ENCODE measurements at regions of chr11 and their contacts with region 1.

Region 1: DNA sequence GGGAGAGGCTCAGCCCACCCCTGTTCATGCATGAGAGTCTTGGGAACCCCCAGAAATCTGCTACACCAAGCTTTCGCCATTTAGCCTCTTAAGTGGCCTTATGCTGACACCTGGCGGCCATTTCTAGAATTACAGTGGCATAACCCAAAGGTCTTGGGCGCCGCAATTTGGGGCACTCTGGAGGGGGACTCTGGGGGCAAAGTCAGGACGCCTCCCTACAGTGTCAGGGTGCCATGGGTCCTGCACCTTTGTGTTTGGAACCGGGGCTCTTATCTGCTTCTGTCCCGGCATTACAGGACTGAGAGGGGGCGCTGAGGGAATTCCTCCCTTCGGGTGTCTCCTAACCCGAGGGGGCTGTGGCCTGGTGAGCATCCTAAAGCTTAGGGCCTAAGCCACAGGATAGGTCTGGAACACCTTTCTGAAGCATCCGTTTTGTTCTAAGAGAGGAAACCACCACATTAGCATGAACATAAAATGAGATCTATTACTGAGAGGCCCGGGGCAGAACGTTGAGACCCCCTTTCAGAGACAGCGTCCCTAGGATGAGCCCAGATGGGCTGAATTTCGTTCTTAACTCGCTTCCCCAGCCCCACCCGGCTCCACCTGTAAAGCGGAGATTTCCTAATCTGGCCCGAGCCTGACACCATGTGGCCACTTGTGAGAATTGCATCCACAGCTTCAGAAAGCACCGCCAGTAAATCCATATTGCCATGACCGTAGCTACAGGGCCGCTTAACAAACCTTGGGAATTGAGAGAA is 9.3 kb downstream of the INS start:
- DNase-seq: peak in 1 of 2 experiments; percentile 91
- H3K4me3 ChIP-seq: peak overlapping the region in 1 of 4 experiments; percentile 33; a peak in 2 of 8 replicates
- H3K27ac ChIP-seq: no peak overlapping the region
- H3K4me1 ChIP-seq: peaks cover 0 to 3% (median 2%) of the 10 kb centered on the region in 4 experiments; a peak in 4 of 7 replicates
- H3K27me3 ChIP-seq: peaks cover 17 to 35% (median 31%) of the 10 kb centered on the region in 4 experiments
- CTCF ChIP-seq: peak; percentile 66 to 84 (median 84)
- EP300 ChIP-seq: no peak
- POLR2A ChIP-seq: no peak
- RAD21 ChIP-seq: peak; percentile 86 to 87

Region 2: DNA sequence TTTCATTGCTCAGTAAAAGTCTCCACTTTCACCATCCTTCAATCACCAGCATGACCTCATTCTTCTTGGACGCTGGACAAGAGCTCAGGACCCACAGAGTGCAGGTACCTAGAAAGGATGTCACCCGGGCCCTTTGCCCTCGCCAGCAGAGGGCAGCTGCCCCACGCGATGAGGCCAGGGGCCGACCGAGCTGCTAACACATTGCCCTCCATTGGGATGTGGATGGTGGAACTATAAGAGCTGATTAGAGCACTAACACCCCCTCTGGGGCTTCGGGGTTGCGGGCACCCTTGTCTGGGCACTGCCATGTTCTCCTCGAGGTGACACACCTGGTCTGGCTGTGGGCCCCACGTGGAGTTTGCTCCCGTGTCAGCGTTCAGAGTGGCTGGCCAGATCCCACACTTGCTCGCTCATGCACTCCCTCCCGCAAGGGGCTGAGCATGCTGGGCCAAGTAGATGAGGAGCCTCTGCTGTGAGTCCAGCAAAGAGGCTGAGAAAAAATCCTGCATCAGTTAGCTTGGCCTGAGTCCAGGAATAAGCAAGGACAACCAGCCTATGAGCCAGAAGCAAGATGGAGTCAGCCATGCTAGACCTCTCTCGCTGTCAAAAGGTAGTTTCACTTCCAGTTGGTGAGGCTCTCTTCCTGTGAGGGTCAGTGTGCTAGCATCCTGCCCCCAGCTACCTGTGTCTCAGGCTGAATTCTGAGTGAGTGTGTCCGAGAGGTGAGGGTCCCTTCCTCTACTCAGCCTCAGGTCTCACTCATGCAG is 444.9 kb before region 1 on chr11:
- CTCF ChIA-PET with region 1: interaction called, 18 read pairs
- POLR2A ChIA-PET with region 1: no interaction called
- DNase-seq: no peak
- H3K4me3 ChIP-seq: no peak overlapping the region
- H3K27ac ChIP-seq: no peak overlapping the region
- H3K4me1 ChIP-seq: no peaks in the 10 kb centered on the region
- H3K27me3 ChIP-seq: peaks cover 0 to 5% (median 2%) of the 10 kb centered on the region in 4 experiments; a peak in 1 of 7 replicates
- CTCF ChIP-seq: peak; percentile 74 to 80 (median 80)
- EP300 ChIP-seq: no peak
- POLR2A ChIP-seq: no peak
- RAD21 ChIP-seq: peak; percentile 81 to 83

Region 3: GRCh38 chr11:1863352-1864216 is 288.1 kb before region 1 on chr11:
- CTCF ChIA-PET with region 1: interaction called, 232 read pairs
- POLR2A ChIA-PET with region 1: no interaction called
- DNase-seq: no peak
- H3K4me3 ChIP-seq: no peak overlapping the region
- H3K27ac ChIP-seq: no peak overlapping the region
- H3K4me1 ChIP-seq: peaks cover 0 to 16% (median 5%) of the 10 kb centered on the region in 4 experiments; a peak in 5 of 7 replicates
- H3K27me3 ChIP-seq: no peaks in the 10 kb centered on the region
- CTCF ChIP-seq: no peak
- EP300 ChIP-seq: no peak
- POLR2A ChIP-seq: no peak
- RAD21 ChIP-seq: no peak

Region 4: DNA sequence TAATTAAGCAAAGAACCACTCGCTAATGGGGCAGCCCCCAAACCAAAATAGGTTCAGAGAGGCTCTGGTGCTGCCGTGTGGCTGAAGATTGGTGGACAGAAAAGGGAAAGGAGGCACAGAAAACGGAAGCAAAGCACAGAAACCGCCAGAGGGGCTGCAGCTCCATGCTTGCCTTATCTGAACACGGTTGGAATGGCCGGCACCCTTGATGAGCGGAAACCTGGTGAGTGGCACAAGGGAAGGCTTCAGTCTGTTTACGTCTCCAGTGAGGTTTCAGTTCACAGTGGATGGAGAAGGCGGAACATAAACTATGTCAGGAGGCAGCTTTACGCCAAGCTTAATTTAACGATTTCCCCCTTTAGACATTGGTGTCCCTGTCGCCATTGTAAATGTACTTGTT is 254.8 kb before region 1 on chr11:
- CTCF ChIA-PET with region 1: interaction called, 12 read pairs
- POLR2A ChIA-PET with region 1: no interaction called
- DNase-seq: no peak
- H3K4me3 ChIP-seq: no peak overlapping the region
- H3K27ac ChIP-seq: no peak overlapping the region
- H3K4me1 ChIP-seq: no peaks in the 10 kb centered on the region
- H3K27me3 ChIP-seq: no peaks in the 10 kb centered on the region; a peak in 1 of 7 replicates
- CTCF ChIP-seq: no peak
- EP300 ChIP-seq: no peak
- POLR2A ChIP-seq: no peak
- RAD21 ChIP-seq: no peak

Region 5: GRCh38 chr11:1953489-1954266 is 198.0 kb before region 1 on chr11:
- CTCF ChIA-PET with region 1: interaction called, 416 read pairs
- POLR2A ChIA-PET with region 1: interaction called, 9 read pairs
- DNase-seq: no peak
- H3K4me3 ChIP-seq: no peak overlapping the region
- H3K27ac ChIP-seq: no peak overlapping the region
- H3K4me1 ChIP-seq: no peaks in the 10 kb centered on the region
- H3K27me3 ChIP-seq: no peaks in the 10 kb centered on the region
- CTCF ChIP-seq: no peak
- EP300 ChIP-seq: no peak
- POLR2A ChIP-seq: no peak
- RAD21 ChIP-seq: no peak

Region 6: GRCh38 chr11:2036863-2037486 is 114.7 kb before region 1 on chr11:
- CTCF ChIA-PET with region 1: interaction called, 551 read pairs
- POLR2A ChIA-PET with region 1: interaction called, 3 read pairs
- DNase-seq: no peak
- H3K4me3 ChIP-seq: no peak overlapping the region
- H3K27ac ChIP-seq: no peak overlapping the region
- H3K4me1 ChIP-seq: no peaks in the 10 kb centered on the region
- H3K27me3 ChIP-seq: no peaks in the 10 kb centered on the region
- CTCF ChIP-seq: no peak
- EP300 ChIP-seq: no peak
- POLR2A ChIP-seq: no peak
- RAD21 ChIP-seq: no peak

Region 7: GRCh38 chr11:2355000-2355644 is 203.4 kb after region 1 on chr11:
- CTCF ChIA-PET with region 1: no interaction called
- POLR2A ChIA-PET with region 1: no interaction called
- DNase-seq: no peak
- H3K4me3 ChIP-seq: no peak overlapping the region
- H3K27ac ChIP-seq: no peak overlapping the region
- H3K4me1 ChIP-seq: no peaks in the 10 kb centered on the region
- H3K27me3 ChIP-seq: no peaks in the 10 kb centered on the region
- CTCF ChIP-seq: no peak
- EP300 ChIP-seq: no peak
- POLR2A ChIP-seq: no peak
- RAD21 ChIP-seq: no peak

Region 8: GRCh38 chr11:2452321-2453012 is 300.8 kb after region 1 on chr11:
- CTCF ChIA-PET with region 1: no interaction called
- POLR2A ChIA-PET with region 1: no interaction called
- DNase-seq: no peak
- H3K4me3 ChIP-seq: no peak overlapping the region
- H3K27ac ChIP-seq: no peak overlapping the region
- H3K4me1 ChIP-seq: no peaks in the 10 kb centered on the region
- H3K27me3 ChIP-seq: peaks cover 8 to 54% (median 28%) of the 10 kb centered on the region in 4 experiments
- CTCF ChIP-seq: no peak
- EP300 ChIP-seq: no peak
- POLR2A ChIP-seq: no peak
- RAD21 ChIP-seq: no peak